Breast epithelium (tissue), 4 donors: ENCODE measurements at regions of chr3 and their contacts with region 1.

Region 1: GRCh38 chr3:173660645-173661615 is 263.4 kb downstream of the NLGN1 start:
- DNase-seq: no peak
- H3K4me3 ChIP-seq: no peak overlapping the region
- H3K27ac ChIP-seq: no peak overlapping the region
- H3K4me1 ChIP-seq: no peaks in the 10 kb centered on the region
- H3K27me3 ChIP-seq: no peaks in the 10 kb centered on the region
- CTCF ChIP-seq: no peak
- POLR2A ChIP-seq: no peak

Region 2: GRCh38 chr3:173003471-173003870 is 657.5 kb before region 1 on chr3:
- intact Hi-C with region 1: loop called (anchors 5 kb)
- DNase-seq: no peak
- H3K4me3 ChIP-seq: no peak overlapping the region
- H3K27ac ChIP-seq: no peak overlapping the region
- H3K4me1 ChIP-seq: no peaks in the 10 kb centered on the region
- H3K27me3 ChIP-seq: no peaks in the 10 kb centered on the region
- CTCF ChIP-seq: no peak
- POLR2A ChIP-seq: no peak

Region 3: DNA sequence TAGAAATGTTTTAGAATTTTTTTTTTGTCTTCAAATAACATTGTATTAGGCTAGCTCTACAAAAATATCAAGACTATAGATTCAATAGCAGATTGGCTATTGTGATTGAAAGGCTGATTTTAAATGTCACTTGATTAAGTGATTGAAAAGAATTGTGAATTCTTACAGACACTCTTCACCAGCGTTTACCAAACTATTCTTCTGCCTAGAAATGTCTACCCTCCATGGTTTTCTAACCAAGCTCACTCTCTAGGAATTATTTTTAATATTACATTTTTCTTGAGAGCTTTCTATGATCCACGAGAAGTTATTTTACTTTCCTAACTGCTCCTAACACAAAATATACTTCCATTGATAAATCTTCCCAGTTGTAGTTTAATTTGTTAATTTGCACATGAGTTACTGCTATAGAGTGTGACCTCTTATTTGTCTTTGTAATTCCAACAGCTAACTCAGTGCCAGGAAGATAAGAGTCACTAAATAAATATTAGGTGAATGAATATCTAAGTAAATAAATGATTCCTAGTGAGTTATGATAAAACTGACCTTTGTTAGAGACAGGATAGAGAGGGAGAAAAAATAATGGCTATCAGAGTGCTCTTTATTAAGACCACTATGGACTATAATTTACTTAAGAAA is 1518.0 kb after region 1 on chr3:
- intact Hi-C with region 1: no loop called
- DNase-seq: no peak
- H3K4me3 ChIP-seq: no peak overlapping the region
- H3K27ac ChIP-seq: no peak overlapping the region
- H3K4me1 ChIP-seq: no peaks in the 10 kb centered on the region
- H3K27me3 ChIP-seq: no peaks in the 10 kb centered on the region
- CTCF ChIP-seq: no peak
- POLR2A ChIP-seq: no peak